ENCODE measurements at regions of chr12 and their contacts with region 1.

Region 1: GRCh38 chr12:22529281-22530060 is 14.9 kb downstream of the C2CD5 start:
- DNase-seq: no peak
- H3K4me3 Mint-ChIP-seq: no peak overlapping the region
- H3K27ac Mint-ChIP-seq: no peak overlapping the region
- H3K4me1 Mint-ChIP-seq: no peaks in the 10 kb centered on the region
- H3K27me3 Mint-ChIP-seq: no peaks in the 10 kb centered on the region
- CTCF ChIP-seq: peak; percentile 23

Region 2: GRCh38 chr12:22624870-22625761 is 95.6 kb after region 1 on chr12 and contains the start of gene ETNK1:
- CTCF ChIA-PET with region 1: interaction called, 15 read pairs
- intact Hi-C with region 1: no loop called
- DNase-seq: peak; percentile 98
- H3K4me3 Mint-ChIP-seq: peak within 1 kb of the TSS; percentile 92
- H3K27ac Mint-ChIP-seq: peak within 1 kb of the TSS; percentile 98
- H3K4me1 Mint-ChIP-seq: peaks cover 12% of the 10 kb centered on the region
- H3K27me3 Mint-ChIP-seq: no peaks in the 10 kb centered on the region
- CTCF ChIP-seq: no peak
- total RNA-seq, gene ETNK1: 124 and 131 TPM in 2 replicates

Region 3: DNA sequence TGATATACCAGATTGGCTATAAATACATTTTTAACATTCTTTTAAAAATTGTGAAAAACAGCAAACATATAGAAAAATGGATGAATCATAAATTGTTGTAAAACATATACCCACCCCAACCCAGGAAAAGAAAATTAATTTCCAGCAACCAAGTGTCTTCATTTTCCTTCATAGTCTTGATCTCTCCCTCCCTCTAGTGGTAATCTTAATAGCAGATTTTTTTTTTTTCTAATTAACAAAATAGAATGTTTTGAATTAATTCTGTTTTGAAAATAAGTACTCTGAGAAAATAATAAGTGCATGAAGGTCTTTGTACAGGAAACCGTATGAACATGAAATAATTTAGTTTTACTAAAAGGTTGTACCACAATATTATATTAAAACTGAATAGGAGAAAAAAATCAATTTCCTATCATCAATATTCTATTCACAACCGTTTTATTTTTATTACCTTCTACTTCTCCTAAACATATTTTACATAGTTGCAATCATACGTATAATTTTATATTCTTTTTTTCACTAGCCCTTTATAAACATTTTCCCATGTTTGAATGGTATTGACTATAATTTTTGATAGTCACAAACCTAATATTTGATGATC is 102.5 kb after region 1 on chr12:
- CTCF ChIA-PET with region 1: interaction called, 8 read pairs
- intact Hi-C with region 1: loop called (anchors 1 kb)
- DNase-seq: no peak
- H3K4me3 Mint-ChIP-seq: no peak overlapping the region
- H3K27ac Mint-ChIP-seq: no peak overlapping the region
- H3K4me1 Mint-ChIP-seq: peaks cover 21% of the 10 kb centered on the region
- H3K27me3 Mint-ChIP-seq: no peaks in the 10 kb centered on the region
- CTCF ChIP-seq: peak; percentile 38

Region 4: DNA sequence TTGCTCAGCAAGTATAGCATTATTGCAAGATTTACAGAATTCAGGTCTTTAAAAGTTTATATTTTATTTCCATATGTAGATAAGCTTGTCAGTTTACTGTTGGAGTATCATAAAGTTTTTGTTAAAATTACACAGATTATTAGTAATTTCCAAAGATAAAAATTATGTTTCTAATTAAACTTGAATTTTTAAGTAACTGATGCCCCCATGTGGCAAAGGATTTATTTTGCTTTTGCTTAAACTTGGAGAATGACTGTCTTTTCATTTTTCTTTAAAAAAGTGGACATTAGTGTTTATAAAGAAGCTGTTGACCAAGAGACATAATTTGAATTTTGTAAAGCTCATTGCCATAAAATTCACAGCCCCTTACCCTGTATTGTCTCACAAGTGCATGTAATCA is 141.3 kb after region 1 on chr12:
- CTCF ChIA-PET with region 1: interaction called, 6 read pairs
- intact Hi-C with region 1: loop called (anchors 2 kb)
- DNase-seq: no peak
- H3K4me3 Mint-ChIP-seq: no peak overlapping the region
- H3K27ac Mint-ChIP-seq: no peak overlapping the region
- H3K4me1 Mint-ChIP-seq: no peaks in the 10 kb centered on the region
- H3K27me3 Mint-ChIP-seq: no peaks in the 10 kb centered on the region
- CTCF ChIP-seq: no peak

Region 5: GRCh38 chr12:23014749-23015148 is 485.3 kb after region 1 on chr12:
- CTCF ChIA-PET with region 1: no interaction called
- intact Hi-C with region 1: no loop called
- DNase-seq: no peak
- H3K4me3 Mint-ChIP-seq: no peak overlapping the region
- H3K27ac Mint-ChIP-seq: no peak overlapping the region
- H3K4me1 Mint-ChIP-seq: no peaks in the 10 kb centered on the region
- H3K27me3 Mint-ChIP-seq: peaks cover 2% of the 10 kb centered on the region
- CTCF ChIP-seq: no peak

Measured in Calu3 (cell line).